ENCODE measurements at regions of chr2 and their contacts with region 1.

Region 1: GRCh38 chr2:191922736-191923651 is 76.1 kb upstream of the CAVIN2 start:
- DNase-seq: no peak
- H3K4me3 ChIP-seq: no peak overlapping the region
- H3K27ac ChIP-seq: no peak overlapping the region
- H3K4me1 ChIP-seq: peaks cover 0 to 2% of the 10 kb centered on the region in 2 donors
- H3K27me3 ChIP-seq: no peaks in the 10 kb centered on the region
- CTCF ChIP-seq: no peak

Region 2: DNA sequence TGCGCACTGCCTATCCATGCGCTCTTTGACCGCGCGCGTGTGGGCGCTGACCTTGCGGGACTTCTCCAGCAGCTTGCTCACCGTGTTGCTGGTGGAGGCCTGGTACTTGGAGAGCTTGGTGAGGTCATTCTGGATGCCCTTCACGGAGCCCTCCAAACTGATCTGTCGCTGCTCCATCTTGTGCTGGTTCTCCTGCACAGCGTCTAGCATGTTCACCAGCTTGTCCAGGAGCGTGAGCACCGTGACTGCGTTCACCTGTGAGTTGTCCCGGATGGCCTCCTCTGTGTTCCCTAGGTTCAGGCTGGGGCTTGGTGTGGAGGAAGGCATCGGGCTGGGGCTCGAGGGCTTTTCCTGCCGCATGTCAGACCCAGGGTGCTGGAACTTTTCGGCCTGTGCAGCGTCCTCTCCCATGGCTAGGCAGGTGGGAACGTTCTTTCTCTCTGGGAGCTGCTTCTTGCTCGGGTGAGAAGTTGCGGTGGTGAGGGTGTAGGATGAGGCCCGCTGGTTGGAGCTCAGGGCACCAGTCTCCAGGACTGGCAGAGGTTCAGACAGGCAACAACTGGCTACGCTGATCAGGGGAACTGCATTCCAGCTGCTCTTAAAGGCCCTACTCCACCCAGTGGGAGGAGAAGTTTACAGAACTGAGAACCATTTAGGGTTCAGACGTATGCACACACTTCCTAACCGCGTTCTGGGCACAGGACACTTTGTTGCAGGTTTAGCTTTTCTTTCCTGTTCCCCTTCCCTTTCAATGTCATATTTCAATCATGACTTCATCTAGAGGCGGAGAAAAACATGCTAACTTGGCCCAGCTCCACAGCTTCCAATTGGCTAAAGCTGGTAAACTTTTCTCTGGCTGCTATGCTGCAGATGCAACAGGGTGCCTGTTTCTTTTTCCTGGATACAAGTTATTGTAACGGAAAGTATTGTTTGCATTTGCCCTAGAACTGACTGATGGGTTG is 76.2 kb before region 1 on chr2 and contains the start of gene CAVIN2:
- intact Hi-C with region 1: loop called (anchors 5 kb)
- DNase-seq: peak in 1 of 2 donors; percentile 70
- H3K4me3 ChIP-seq: peak within 1 kb of the TSS; percentile 31 to 51
- H3K27ac ChIP-seq: peak within 1 kb of the TSS in 1 of 2 donors; percentile 54
- H3K4me1 ChIP-seq: peaks cover 0 to 5% of the 10 kb centered on the region in 2 donors
- H3K27me3 ChIP-seq: no peaks in the 10 kb centered on the region
- CTCF ChIP-seq: no peak
- total RNA-seq, gene CAVIN2: 43.4 TPM

Region 3: DNA sequence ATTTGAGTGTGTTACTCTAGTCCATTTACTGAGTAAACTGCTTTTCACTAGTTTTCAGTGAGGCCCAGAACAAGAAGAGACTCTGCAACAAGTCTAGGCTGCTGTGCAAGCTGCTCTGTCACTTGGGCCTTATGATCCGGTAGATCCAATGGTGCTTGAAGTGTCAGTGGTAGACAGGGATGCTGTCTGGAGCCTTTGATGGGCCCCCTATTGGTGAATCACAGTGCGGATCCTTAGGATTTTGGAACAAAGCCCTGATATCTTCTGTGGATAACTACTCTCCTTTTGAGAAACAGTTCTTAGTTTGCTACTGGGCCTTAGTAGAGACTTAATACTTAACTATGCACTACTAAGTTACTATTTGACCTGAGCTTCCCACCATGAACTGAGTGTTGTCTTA is 121.5 kb after region 1 on chr2:
- intact Hi-C with region 1: no loop called
- DNase-seq: no peak
- H3K4me3 ChIP-seq: no peak overlapping the region
- H3K27ac ChIP-seq: no peak overlapping the region
- H3K4me1 ChIP-seq: no peaks in the 10 kb centered on the region
- H3K27me3 ChIP-seq: no peaks in the 10 kb centered on the region
- CTCF ChIP-seq: no peak

Region 4: DNA sequence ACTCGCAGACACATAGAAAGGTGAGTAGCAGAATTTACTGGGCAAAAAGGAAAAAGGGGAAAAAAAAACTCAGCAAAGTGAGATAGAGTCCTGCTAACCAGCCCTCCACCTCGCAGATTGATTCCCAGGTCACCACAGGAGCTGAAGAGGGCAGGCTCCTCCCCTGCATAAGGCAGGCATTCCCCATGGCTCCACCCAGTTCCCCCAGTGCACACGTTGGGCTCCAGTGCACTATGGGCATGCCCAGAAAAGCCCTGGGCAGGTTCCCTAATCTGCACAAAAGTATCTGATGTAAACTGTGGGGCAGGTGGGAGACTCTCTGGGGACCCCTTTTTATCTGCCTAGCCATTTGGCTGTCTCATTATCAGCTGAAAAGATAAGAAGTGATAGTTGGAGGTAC is 732.9 kb after region 1 on chr2:
- intact Hi-C with region 1: no loop called
- DNase-seq: no peak
- H3K4me3 ChIP-seq: no peak overlapping the region
- H3K27ac ChIP-seq: no peak overlapping the region
- H3K4me1 ChIP-seq: no peaks in the 10 kb centered on the region
- H3K27me3 ChIP-seq: no peaks in the 10 kb centered on the region
- CTCF ChIP-seq: no peak